Heart left ventricle (tissue), 16 donors: ENCODE measurements at regions of chr4 and their contacts with region 1.

Region 1: DNA sequence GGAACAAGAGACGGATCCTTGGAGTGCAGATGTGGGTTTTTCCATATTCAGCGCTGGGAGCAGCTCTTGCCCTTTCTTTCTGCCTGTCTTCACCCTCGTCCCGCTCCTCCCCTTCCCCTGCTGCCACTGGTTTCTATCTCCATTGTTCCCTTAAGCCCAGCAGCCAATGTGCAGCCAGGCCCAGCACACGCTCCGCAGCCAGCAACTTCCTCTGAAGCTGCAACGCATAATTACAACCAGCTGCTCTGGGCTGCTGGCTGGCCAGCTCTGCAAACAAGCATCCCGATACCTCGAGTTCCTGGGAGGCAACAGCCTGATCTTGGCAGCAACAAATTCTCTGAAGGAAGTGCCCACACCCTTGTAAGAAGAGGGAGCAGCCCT is 83.6 kb upstream of the MAML3 start:
- DNase-seq: peak; percentile 66 to 89 (median 83)
- ATAC-seq: peak; percentile 83 to 86 (median 85)
- H3K4me3 ChIP-seq: peak overlapping the region in 10 of 12 donors; percentile 9 to 37 (median 30)
- H3K27ac ChIP-seq: peak overlapping the region; percentile 6 to 92 (median 86)
- H3K4me1 ChIP-seq: peaks cover 0 to 38% (median 26%) of the 10 kb centered on the region in 12 donors
- H3K27me3 ChIP-seq: no peaks in the 10 kb centered on the region
- CTCF ChIP-seq: no peak
- POLR2A ChIP-seq: no peak

Region 2: DNA sequence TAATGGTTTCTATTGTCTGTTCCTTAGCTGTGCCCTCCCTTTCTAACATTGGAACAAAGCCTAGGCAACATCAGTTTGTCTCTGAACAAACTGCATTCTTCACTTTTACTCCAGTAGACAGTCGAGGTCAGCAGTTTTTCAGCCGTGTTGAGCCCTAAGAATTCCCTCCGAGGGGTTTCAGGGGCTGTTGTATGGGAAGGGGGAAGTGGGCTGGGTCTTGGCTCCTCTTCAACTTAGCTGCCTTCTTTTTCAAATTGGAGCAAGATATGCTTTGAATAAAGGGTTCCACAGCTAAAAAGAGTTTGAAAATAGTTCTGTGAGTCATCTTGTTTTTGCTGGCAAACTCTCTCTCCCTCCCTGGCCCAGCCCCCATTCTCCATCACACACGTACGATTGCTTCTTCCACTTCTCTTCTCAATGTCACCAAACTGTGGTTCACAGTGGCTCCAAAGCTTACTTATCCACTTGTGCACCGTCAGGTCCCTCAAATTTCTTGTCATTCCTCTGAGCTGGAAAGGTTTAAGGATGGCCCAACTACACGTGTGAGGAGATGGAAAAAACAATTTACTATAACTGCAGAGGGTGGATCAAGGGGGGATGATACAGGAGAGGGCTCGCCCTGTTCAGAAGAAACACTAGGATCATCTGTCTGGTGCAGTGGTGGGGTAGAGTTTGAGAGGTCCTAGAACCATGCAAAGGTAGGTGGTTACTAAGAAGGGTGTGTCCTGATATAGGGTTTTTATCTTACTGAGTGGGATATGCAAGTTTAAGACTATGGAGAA is 74.4 kb before region 1 on chr4:
- intact Hi-C with region 1: loop called in 2 of 10 experiments (anchors 5 kb)
- DNase-seq: peak in 1 of 5 donors; percentile 25
- ATAC-seq: peak in 2 of 4 donors; percentile 44 to 70
- H3K4me3 ChIP-seq: peak overlapping the region in 2 of 12 donors; percentile 6 to 43
- H3K27ac ChIP-seq: peak overlapping the region in 1 of 12 donors; percentile 59
- H3K4me1 ChIP-seq: peaks cover 0 to 20% (median 2%) of the 10 kb centered on the region in 12 donors
- H3K27me3 ChIP-seq: no peaks in the 10 kb centered on the region
- CTCF ChIP-seq: no peak
- POLR2A ChIP-seq: no peak

Region 3: GRCh38 chr4:140829825-140830224 is 592.2 kb after region 1 on chr4:
- intact Hi-C with region 1: no loop called
- DNase-seq: no peak
- ATAC-seq: no peak
- H3K4me3 ChIP-seq: no peak overlapping the region
- H3K27ac ChIP-seq: no peak overlapping the region
- H3K4me1 ChIP-seq: no peaks in the 10 kb centered on the region
- H3K27me3 ChIP-seq: peaks cover 0 to 3% (median 0%) of the 10 kb centered on the region in 9 donors
- CTCF ChIP-seq: no peak
- POLR2A ChIP-seq: no peak